Activated naive CD4-positive, alpha-beta T cell treated with anti-CD3 and anti-CD28 coated beads for 36 hours (primary cell): ENCODE measurements at regions of chr2 and their contacts with region 1.

Region 1: DNA sequence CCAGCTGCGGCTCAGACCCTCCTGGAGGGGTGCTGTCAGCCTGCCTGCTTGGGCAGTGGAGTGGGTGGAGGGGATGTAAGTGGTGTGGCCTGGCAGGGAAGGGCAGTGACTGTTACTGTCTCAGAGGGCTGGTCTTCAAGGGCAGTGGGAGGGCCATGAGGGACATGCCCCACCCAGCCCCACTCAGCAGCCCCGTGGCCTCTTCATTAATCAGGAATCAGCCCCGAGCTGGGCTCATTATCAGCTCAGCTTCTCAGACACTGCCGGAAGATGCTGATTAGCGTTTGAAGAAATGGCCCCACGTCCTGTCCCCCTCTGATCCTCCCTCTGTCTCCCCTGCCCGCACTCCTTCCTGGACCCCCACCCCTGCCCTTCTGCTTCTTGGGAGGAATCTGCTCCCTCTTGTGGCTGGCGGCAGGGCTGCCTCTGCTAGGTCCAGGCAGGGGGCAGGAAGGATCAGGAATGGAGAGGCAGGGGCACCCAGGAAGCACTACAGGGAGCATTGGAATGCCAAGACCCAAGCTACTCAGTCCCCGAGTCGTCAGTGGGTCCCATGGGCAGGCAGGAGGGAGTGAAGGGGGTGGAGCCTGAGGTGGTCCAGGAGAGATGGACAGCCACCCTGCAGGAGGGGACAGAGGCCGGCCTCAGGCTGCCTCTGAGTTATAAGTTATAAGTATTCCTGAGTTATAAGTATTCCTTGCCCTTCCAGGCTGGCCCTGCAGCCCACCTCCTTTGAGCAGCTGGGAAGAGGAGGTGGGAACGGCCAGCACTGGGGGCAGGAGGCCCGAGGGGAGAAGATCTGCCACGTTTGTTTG is 7.0 kb downstream of the ASIC4 start:
- DNase-seq: peak; percentile 34
- H3K4me3 Mint-ChIP-seq: no peak overlapping the region
- H3K27ac Mint-ChIP-seq: no peak overlapping the region
- H3K4me1 Mint-ChIP-seq: peaks cover 14% of the 10 kb centered on the region
- H3K27me3 Mint-ChIP-seq: peaks cover 64% of the 10 kb centered on the region

Region 2: GRCh38 chr2:219475697-219476651 is 45.3 kb before region 1 on chr2:
- CTCF ChIA-PET with region 1: interaction called, 73 read pairs
- intact Hi-C with region 1: loop called (anchors 2 kb)
- DNase-seq: peak; percentile 80
- H3K4me3 Mint-ChIP-seq: no peak overlapping the region
- H3K27ac Mint-ChIP-seq: no peak overlapping the region
- H3K4me1 Mint-ChIP-seq: peaks cover 4% of the 10 kb centered on the region
- H3K27me3 Mint-ChIP-seq: peaks cover 2% of the 10 kb centered on the region